ENCODE measurements at regions of chr6 and their contacts with region 1.

Region 1: GRCh38 chr6:11428895-11429294 is 108.7 kb upstream of the TMEM170B start:
- DNase-seq: peak; percentile 47 to 89
- H3K4me3 ChIP-seq: no peak overlapping the region
- H3K27ac ChIP-seq: peak overlapping the region; percentile 80
- H3K4me1 ChIP-seq: peaks cover 90% of the 10 kb centered on the region
- H3K27me3 ChIP-seq: no peaks in the 10 kb centered on the region
- CTCF ChIP-seq: no peak

Region 2: GRCh38 chr6:11207199-11207968 is 221.5 kb before region 1 on chr6:
- CTCF ChIA-PET with region 1: no interaction called
- POLR2A ChIA-PET with region 1: interaction called, 3 read pairs
- intact Hi-C with region 1: loop called (anchors 2 kb)
- DNase-seq: peak; percentile 84 to 98
- H3K4me3 ChIP-seq: no peak overlapping the region; the same call in 1 of the 2 replicates
- H3K27ac ChIP-seq: peak overlapping the region; percentile 92
- H3K4me1 ChIP-seq: peaks cover 36% of the 10 kb centered on the region
- H3K27me3 ChIP-seq: no peaks in the 10 kb centered on the region
- CTCF ChIP-seq: no peak

Region 3: DNA sequence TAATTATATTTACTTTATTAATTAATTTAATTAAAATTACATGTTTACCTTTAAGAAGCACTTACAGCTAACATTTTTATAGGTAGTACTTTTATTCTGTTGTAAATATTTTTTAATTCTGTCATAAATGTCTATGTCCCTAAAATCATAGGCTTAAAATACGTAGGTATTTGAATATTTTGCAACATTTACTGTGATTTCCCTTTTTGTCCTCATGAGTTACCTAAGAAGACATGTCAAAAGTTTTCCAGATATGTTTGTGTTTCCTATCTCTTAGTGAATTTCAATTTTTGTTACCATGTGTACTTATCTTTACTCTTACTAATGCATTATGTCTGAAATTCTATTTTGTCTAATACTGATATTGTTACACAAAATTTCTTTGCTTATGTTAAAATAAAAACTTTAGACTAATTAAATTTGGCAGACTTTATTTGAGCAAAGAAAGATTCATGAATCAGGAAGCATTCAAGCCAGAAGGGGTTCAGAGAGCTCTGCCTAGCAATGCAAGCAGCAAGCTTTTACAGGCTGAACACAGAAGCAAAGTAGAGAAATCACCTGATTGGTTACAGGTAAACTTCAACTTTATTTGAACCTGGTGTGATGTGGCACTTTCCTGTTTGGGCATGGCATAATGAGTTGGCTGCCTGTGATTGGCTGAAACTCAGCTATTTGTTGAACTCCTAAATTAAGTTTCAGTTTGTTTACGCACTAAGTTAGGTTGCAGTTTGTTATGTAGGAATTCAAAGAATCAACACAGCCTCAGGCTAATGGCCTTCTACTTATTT is 14.5 kb before region 1 on chr6:
- CTCF ChIA-PET with region 1: interaction called, 3 read pairs
- POLR2A ChIA-PET with region 1: interaction called, 13 read pairs
- intact Hi-C with region 1: loop called (anchors 2 kb)
- DNase-seq: peak; percentile 69 to 94
- H3K4me3 ChIP-seq: peak overlapping the region; percentile 19; the same call in 1 of the 2 replicates
- H3K27ac ChIP-seq: peak overlapping the region; percentile 95
- H3K4me1 ChIP-seq: peaks cover 46% of the 10 kb centered on the region
- H3K27me3 ChIP-seq: no peaks in the 10 kb centered on the region
- CTCF ChIP-seq: no peak